BJ (cell line): ENCODE measurements at regions of chr5 and their contacts with region 1.

Region 1: GRCh38 chr5:82351754-82352145 is 73.6 kb upstream of the RPS23 start:
- DNase-seq: no peak
- H3K4me3 ChIP-seq: no peak overlapping the region
- H3K27me3 ChIP-seq: no peaks in the 10 kb centered on the region
- CTCF ChIP-seq: peak; percentile 73

Region 2: GRCh38 chr5:82312373-82312856 is 39.3 kb before region 1 on chr5:
- CTCF ChIA-PET with region 1: interaction called, 85 read pairs
- POLR2A ChIA-PET with region 1: no interaction called
- DNase-seq: no peak
- H3K4me3 ChIP-seq: no peak overlapping the region
- H3K27me3 ChIP-seq: no peaks in the 10 kb centered on the region
- CTCF ChIP-seq: peak; percentile 98

Region 3: DNA sequence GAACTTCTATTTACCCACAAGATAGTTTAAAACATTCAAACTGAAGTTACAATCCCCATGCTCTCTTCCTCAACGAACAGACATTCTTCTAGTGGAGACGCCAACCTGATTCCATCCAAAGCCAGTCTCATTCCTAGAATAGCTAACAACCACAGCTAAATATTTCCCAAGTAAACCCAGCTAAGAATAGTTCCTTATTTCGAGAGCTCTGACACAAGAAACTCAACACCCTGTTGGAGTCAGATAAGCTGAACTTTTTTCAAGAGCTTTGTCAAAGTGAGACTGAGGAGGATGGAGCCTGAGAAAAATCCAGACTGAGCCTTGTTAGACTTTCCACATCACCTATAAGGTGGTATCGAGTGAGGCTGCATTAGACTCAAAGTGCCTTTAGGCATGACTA is 16.9 kb before region 1 on chr5:
- CTCF ChIA-PET with region 1: interaction called, 30 read pairs
- POLR2A ChIA-PET with region 1: interaction called, 4 read pairs
- DNase-seq: peak; percentile 95
- H3K4me3 ChIP-seq: no peak overlapping the region
- H3K27me3 ChIP-seq: no peaks in the 10 kb centered on the region
- CTCF ChIP-seq: no peak

Region 4: DNA sequence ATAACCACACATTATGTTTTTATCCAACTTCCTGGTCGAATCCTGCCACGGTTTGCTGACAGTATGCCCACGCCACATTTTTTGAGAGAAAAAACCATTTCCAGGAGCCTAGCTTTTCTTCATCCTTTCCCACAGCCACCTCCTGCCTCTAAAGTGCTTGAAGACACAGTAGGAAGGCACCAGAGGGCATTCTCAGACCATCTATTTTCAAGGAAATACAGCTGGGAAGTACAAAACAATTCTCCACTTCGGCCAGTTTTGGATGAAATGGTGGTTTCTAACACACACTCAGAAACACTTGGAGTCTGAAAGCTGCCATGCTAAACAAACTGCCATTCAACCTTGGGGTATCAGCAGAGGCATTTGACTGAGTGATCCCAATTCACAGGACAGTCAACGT is 12.7 kb after region 1 on chr5:
- CTCF ChIA-PET with region 1: interaction called, 11 read pairs
- POLR2A ChIA-PET with region 1: no interaction called
- DNase-seq: no peak
- H3K4me3 ChIP-seq: no peak overlapping the region
- H3K27me3 ChIP-seq: no peaks in the 10 kb centered on the region
- CTCF ChIP-seq: peak; percentile 63

Region 5: DNA sequence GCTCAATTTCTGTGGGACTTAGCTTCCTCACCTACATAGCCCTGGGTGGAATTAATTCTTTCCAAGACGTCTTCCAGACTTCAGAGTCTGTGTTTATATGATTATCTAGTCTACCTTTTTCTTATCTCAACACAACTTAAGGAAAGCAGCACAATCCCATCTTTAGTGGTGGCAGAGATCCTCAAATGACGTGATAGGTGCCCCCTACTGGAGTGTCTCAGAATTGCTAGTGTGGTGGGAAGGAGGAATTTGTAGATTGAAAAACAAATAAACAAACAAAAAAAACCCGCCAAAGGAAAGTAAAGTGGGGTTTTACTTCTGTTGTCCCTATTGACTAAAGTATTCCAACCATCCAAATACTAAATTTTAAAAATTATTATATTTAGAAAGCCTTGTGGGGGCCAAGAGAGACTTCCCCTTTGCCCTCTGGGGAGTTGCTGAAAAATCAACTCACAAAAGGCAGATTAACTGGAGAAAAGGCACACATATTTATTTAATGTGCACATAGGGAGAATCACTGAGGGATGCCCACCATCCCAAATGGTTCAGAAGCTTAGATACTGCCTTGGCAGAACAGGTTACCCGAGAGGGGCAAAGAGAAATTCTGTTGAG is 442.2 kb after region 1 on chr5:
- CTCF ChIA-PET with region 1: interaction called, 10 read pairs
- POLR2A ChIA-PET with region 1: no interaction called
- DNase-seq: no peak
- H3K4me3 ChIP-seq: no peak overlapping the region
- H3K27me3 ChIP-seq: no peaks in the 10 kb centered on the region
- CTCF ChIP-seq: peak; percentile 72